A673 (cell line): ENCODE measurements at regions of chr3 and their contacts with region 1.

Region 1: GRCh38 chr3:139887431-139887830 is 47.6 kb upstream of the CLSTN2 start:
- DNase-seq: peak; percentile 25
- H3K4me3 ChIP-seq: no peak overlapping the region
- H3K27ac ChIP-seq: peak overlapping the region; percentile 79
- H3K4me1 ChIP-seq: peaks cover 8% of the 10 kb centered on the region
- H3K27me3 ChIP-seq: no peaks in the 10 kb centered on the region
- CTCF ChIP-seq: no peak

Region 2: DNA sequence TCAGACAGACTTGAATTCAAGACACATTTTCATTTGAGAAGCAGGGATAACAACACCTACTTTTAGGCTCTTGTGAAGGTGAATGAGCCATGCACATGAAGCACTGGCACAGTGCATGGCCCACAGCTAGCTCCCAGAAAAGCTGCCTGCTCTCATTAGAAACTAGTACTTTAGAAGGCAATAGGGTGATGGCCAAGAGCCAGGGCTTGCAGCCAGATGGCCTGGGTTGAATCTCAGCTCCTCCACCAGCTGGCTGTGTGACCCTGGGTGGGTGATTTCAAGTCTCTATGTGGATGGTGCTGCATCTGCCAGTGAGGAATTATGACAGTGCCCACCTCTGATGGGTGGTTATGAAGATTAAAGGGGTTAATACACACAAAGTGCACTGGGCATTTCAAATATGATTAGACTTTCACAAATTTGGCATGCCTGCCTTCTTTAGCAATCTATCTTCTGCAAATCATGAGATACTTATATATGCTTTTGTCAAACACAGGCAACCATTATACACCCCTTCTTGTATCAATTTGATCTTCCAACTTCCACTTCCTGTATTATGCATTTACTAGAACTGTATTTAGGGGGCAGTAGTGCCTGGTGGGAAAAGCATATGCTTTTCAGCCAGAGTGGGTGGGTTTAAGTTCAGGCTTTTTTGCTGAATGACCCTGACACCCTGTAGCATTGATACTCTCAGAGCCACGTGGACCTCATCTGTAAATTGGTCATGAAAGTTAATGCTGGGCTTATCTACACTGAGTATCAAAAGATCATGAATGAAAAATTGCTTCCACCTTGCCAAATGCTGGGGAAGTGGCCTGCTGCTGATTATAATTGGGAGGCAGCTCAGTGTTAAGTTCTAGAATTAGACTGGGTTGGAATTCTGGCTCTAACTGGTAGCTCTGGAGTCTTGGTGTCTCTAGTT is 313.1 kb before region 1 on chr3:
- CTCF ChIA-PET with region 1: no interaction called
- POLR2A ChIA-PET with region 1: no interaction called
- intact Hi-C with region 1: loop called (anchors 5 kb)
- DNase-seq: peak; percentile 68
- H3K4me3 ChIP-seq: no peak overlapping the region
- H3K27ac ChIP-seq: peak overlapping the region; percentile 85
- H3K4me1 ChIP-seq: peaks cover 46% of the 10 kb centered on the region
- H3K27me3 ChIP-seq: no peaks in the 10 kb centered on the region
- CTCF ChIP-seq: peak; percentile 54